ENCODE measurements at regions of chr4 and their contacts with region 1.

Region 1: GRCh38 chr4:121096629-121097028 is 24.3 kb upstream of the NDNF start:
- DNase-seq: no peak
- H3K4me3 ChIP-seq: no peak overlapping the region
- H3K27ac ChIP-seq: no peak overlapping the region
- H3K4me1 ChIP-seq: no peaks in the 10 kb centered on the region
- H3K27me3 ChIP-seq: no peaks in the 10 kb centered on the region
- CTCF ChIP-seq: peak; percentile 40 to 61 (median 60)
- EP300 ChIP-seq: no peak
- POLR2A ChIP-seq: no peak

Region 2: GRCh38 chr4:120071192-120071795 is 1025.3 kb before region 1 on chr4:
- intact Hi-C with region 1: loop called (anchors 10 kb)
- DNase-seq: no peak
- H3K4me3 ChIP-seq: no peak overlapping the region
- H3K27ac ChIP-seq: no peak overlapping the region
- H3K4me1 ChIP-seq: peaks cover 8 to 26% (median 19%) of the 10 kb centered on the region in 4 donors
- H3K27me3 ChIP-seq: no peaks in the 10 kb centered on the region
- CTCF ChIP-seq: peak; percentile 66 to 74 (median 71)
- EP300 ChIP-seq: no peak
- POLR2A ChIP-seq: no peak

Region 3: GRCh38 chr4:120156120-120156718 is 940.4 kb before region 1 on chr4:
- intact Hi-C with region 1: loop called (anchors 2 kb)
- DNase-seq: no peak
- H3K4me3 ChIP-seq: no peak overlapping the region
- H3K27ac ChIP-seq: no peak overlapping the region
- H3K4me1 ChIP-seq: no peaks in the 10 kb centered on the region
- H3K27me3 ChIP-seq: no peaks in the 10 kb centered on the region
- CTCF ChIP-seq: peak; percentile 55 to 71 (median 63)
- EP300 ChIP-seq: no peak
- POLR2A ChIP-seq: no peak

Region 4: GRCh38 chr4:120723986-120724385 is 372.6 kb before region 1 on chr4:
- intact Hi-C with region 1: loop called (anchors 5 kb)
- DNase-seq: no peak
- H3K4me3 ChIP-seq: no peak overlapping the region
- H3K27ac ChIP-seq: no peak overlapping the region
- H3K4me1 ChIP-seq: peaks cover 0 to 4% (median 0%) of the 10 kb centered on the region in 4 donors
- H3K27me3 ChIP-seq: no peaks in the 10 kb centered on the region
- CTCF ChIP-seq: no peak
- EP300 ChIP-seq: no peak
- POLR2A ChIP-seq: no peak

Region 5: GRCh38 chr4:120902925-120903324 is 193.7 kb before region 1 on chr4:
- intact Hi-C with region 1: no loop called
- DNase-seq: no peak
- H3K4me3 ChIP-seq: no peak overlapping the region
- H3K27ac ChIP-seq: no peak overlapping the region
- H3K4me1 ChIP-seq: no peaks in the 10 kb centered on the region
- H3K27me3 ChIP-seq: no peaks in the 10 kb centered on the region
- CTCF ChIP-seq: no peak
- EP300 ChIP-seq: no peak
- POLR2A ChIP-seq: no peak

Region 6: DNA sequence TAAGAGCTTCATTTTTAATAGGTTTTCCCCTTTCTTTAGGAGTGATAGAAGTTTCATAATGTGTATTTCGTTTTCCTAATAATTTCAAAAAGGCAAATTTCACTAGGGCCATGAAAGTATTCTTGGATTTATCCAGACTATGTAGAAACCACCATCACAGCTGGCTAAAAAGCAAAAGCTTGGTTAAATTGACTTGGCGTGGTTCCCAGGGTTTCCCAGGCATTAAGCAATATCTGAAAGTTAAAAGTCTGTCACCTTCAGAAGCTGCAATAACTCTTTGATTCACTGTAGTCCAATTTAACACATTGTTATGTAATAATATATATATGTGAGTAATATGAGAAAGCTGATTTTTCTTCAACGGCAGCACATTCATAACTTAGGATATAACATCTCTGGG is 62.6 kb before region 1 on chr4:
- intact Hi-C with region 1: no loop called
- DNase-seq: no peak
- H3K4me3 ChIP-seq: no peak overlapping the region
- H3K27ac ChIP-seq: no peak overlapping the region
- H3K4me1 ChIP-seq: peaks cover 0 to 5% (median 0%) of the 10 kb centered on the region in 4 donors
- H3K27me3 ChIP-seq: no peaks in the 10 kb centered on the region
- CTCF ChIP-seq: no peak
- EP300 ChIP-seq: no peak
- POLR2A ChIP-seq: no peak

Region 7: DNA sequence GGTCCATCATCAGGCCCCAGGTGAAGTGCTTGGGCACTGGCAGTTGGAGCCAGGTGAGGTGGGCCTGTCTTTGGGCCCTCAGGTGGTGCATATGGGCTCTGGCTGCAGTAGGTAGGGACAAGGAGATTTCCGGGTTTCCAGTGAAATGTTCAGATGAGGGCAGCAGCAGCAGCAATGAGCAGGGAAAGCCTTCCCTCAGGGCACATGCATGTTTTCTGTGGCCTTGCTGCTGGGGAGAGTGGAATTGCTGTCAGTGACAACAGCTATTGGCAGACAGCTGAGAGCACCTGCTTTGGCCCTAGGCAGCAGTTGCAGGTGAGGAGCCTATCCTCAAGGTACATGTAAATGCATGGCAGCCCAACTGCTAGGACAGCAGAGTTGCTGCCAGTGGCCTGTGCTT is 343.0 kb after region 1 on chr4:
- intact Hi-C with region 1: no loop called
- DNase-seq: no peak
- H3K4me3 ChIP-seq: no peak overlapping the region
- H3K27ac ChIP-seq: no peak overlapping the region
- H3K4me1 ChIP-seq: no peaks in the 10 kb centered on the region
- H3K27me3 ChIP-seq: no peaks in the 10 kb centered on the region
- CTCF ChIP-seq: no peak
- EP300 ChIP-seq: no peak
- POLR2A ChIP-seq: no peak

Region 8: GRCh38 chr4:121656269-121656641 is 559.6 kb after region 1 on chr4:
- intact Hi-C with region 1: no loop called
- DNase-seq: no peak
- H3K4me3 ChIP-seq: no peak overlapping the region
- H3K27ac ChIP-seq: no peak overlapping the region
- H3K4me1 ChIP-seq: peaks cover 0 to 11% (median 5%) of the 10 kb centered on the region in 4 donors
- H3K27me3 ChIP-seq: no peaks in the 10 kb centered on the region
- CTCF ChIP-seq: peak; percentile 28 to 60 (median 56)
- EP300 ChIP-seq: no peak
- POLR2A ChIP-seq: no peak

Measured in esophagus muscularis mucosa (tissue), 4 donors.